HEK293T (cell line): ENCODE measurements at regions of chr1 and their contacts with region 1.

Region 1: GRCh38 chr1:229495782-229496181 is 12.4 kb downstream of the NUP133 start:
- DNase-seq: no peak

Region 2: GRCh38 chr1:229378586-229379367 is 117.0 kb before region 1 on chr1:
- CTCF ChIA-PET with region 1: no interaction called
- POLR2A ChIA-PET with region 1: no interaction called
- DNase-seq: peak; percentile 63

Region 3: GRCh38 chr1:229482511-229482910 is 13.3 kb before region 1 on chr1:
- CTCF ChIA-PET with region 1: interaction called, 11 read pairs
- POLR2A ChIA-PET with region 1: interaction called, 3 read pairs
- DNase-seq: no peak